ENCODE measurements at regions of chr2 and their contacts with region 1.

Region 1: GRCh38 chr2:207529330-207530159 is at the start of gene CREB1:
- DNase-seq: peak; percentile 98 to 100
- H3K4me3 ChIP-seq: peak within 1 kb of the TSS; percentile 89
- H3K4me3 Mint-ChIP-seq: peak within 1 kb of the TSS; percentile 78
- H3K27ac Mint-ChIP-seq: peak within 1 kb of the TSS; percentile 97
- H3K4me1 ChIP-seq: peaks cover 35% of the 10 kb centered on the region
- H3K4me1 Mint-ChIP-seq: peaks cover 21% of the 10 kb centered on the region
- H3K27me3 ChIP-seq: no peaks in the 10 kb centered on the region
- H3K27me3 Mint-ChIP-seq: no peaks in the 10 kb centered on the region
- CTCF ChIP-seq: no peak
- total RNA-seq, gene CREB1: 49.7 and 59.0 TPM in 2 replicates

Region 2: DNA sequence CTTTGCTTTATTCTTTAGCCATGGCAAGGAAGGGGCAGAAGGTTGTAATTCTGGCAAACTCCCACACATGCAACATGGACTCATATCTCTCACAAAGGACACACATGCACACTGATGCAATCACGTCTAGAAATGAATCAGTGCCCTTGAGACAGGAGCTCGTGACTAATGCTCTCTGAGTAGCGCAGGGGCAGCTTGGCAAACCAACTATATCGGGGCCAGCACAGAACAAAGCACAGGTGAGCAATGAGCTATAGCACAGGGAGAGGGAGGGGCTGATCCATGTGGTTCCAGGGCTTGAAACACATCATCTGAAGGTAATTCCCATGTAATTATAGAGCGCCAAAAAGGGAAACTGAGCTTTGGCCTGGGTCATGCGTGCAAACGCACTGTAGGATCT is 198.6 kb before region 1 on chr2:
- CTCF ChIA-PET with region 1: no interaction called
- POLR2A ChIA-PET with region 1: no interaction called
- intact Hi-C with region 1: no loop called
- DNase-seq: no peak
- H3K4me3 ChIP-seq: no peak overlapping the region
- H3K4me3 Mint-ChIP-seq: no peak overlapping the region
- H3K27ac Mint-ChIP-seq: no peak overlapping the region
- H3K4me1 ChIP-seq: no peaks in the 10 kb centered on the region
- H3K4me1 Mint-ChIP-seq: peaks cover 8% of the 10 kb centered on the region
- H3K27me3 ChIP-seq: no peaks in the 10 kb centered on the region
- H3K27me3 Mint-ChIP-seq: peaks cover 14% of the 10 kb centered on the region
- CTCF ChIP-seq: no peak

Region 3: DNA sequence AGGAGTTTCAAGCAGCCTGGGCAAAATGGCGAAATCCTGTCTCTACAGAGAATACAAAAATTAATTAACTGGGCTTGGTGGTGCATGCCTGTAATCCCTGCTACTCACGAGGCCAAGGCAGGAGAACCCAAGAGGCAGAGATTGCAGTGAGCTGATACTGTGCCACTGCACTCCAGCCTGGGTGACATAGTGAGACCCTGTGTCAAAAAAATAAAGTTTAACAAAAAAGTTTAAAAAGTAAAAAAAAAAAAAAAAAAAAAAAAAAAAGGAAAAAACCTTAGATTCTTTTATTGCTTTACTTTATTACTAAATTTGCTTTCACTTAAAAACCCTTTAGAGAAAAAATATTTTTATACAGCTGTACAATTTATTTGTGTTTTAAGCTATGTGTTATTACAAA is 10.9 kb after region 1 on chr2:
- CTCF ChIA-PET with region 1: interaction called, 3 read pairs
- POLR2A ChIA-PET with region 1: interaction called, 19 read pairs
- intact Hi-C with region 1: no loop called
- DNase-seq: no peak
- H3K4me3 ChIP-seq: no peak overlapping the region
- H3K4me3 Mint-ChIP-seq: no peak overlapping the region
- H3K27ac Mint-ChIP-seq: no peak overlapping the region
- H3K4me1 ChIP-seq: no peaks in the 10 kb centered on the region
- H3K4me1 Mint-ChIP-seq: peaks cover 7% of the 10 kb centered on the region
- H3K27me3 ChIP-seq: no peaks in the 10 kb centered on the region
- H3K27me3 Mint-ChIP-seq: no peaks in the 10 kb centered on the region
- CTCF ChIP-seq: no peak

Region 4: GRCh38 chr2:207558106-207558505 is 28.6 kb after region 1 on chr2:
- CTCF ChIA-PET with region 1: no interaction called
- POLR2A ChIA-PET with region 1: interaction called, 7 read pairs
- intact Hi-C with region 1: loop called (anchors 1 kb)
- DNase-seq: no peak
- H3K4me3 ChIP-seq: no peak overlapping the region
- H3K4me3 Mint-ChIP-seq: no peak overlapping the region
- H3K27ac Mint-ChIP-seq: peak overlapping the region; percentile 34
- H3K4me1 ChIP-seq: peaks cover 22% of the 10 kb centered on the region
- H3K4me1 Mint-ChIP-seq: peaks cover 29% of the 10 kb centered on the region
- H3K27me3 ChIP-seq: no peaks in the 10 kb centered on the region
- H3K27me3 Mint-ChIP-seq: no peaks in the 10 kb centered on the region
- CTCF ChIP-seq: no peak

Measured in Caco-2 (cell line).